CD4-positive, alpha-beta T cell (primary cell): ENCODE measurements at regions of chr3 and their contacts with region 1.

Region 1: GRCh38 chr3:195909644-195910508 is 1.5 kb upstream of the TNK2 start:
- DNase-seq: peak; percentile 84 to 97 (median 92)
- ATAC-seq: peak; percentile 55
- H3K4me3 ChIP-seq: peak overlapping the region; percentile 51
- H3K4me3 Mint-ChIP-seq: peak overlapping the region; percentile 85
- H3K27ac ChIP-seq: peak overlapping the region; percentile 44 to 59
- H3K27ac Mint-ChIP-seq: peak overlapping the region; percentile 72
- H3K4me1 ChIP-seq: peaks cover 53% of the 10 kb centered on the region
- H3K4me1 Mint-ChIP-seq: peaks cover 37% of the 10 kb centered on the region
- H3K27me3 ChIP-seq: no peaks in the 10 kb centered on the region
- H3K27me3 Mint-ChIP-seq: no peaks in the 10 kb centered on the region
- CTCF ChIP-seq: no peak

Region 2: GRCh38 chr3:195542698-195543499 is 367.0 kb before region 1 on chr3 and contains the start of gene PPP1R2:
- CTCF ChIA-PET with region 1: interaction called, 3 read pairs
- POLR2A ChIA-PET with region 1: interaction called, 16 read pairs
- intact Hi-C with region 1: no loop called
- DNase-seq: peak; percentile 82 to 97 (median 91)
- ATAC-seq: peak; percentile 80
- H3K4me3 ChIP-seq: peak within 1 kb of the TSS; percentile 70
- H3K4me3 Mint-ChIP-seq: peak within 1 kb of the TSS; percentile 88
- H3K27ac ChIP-seq: peak within 1 kb of the TSS; percentile 95 to 96
- H3K27ac Mint-ChIP-seq: peak within 1 kb of the TSS; percentile 93
- H3K4me1 ChIP-seq: peaks cover 52% of the 10 kb centered on the region
- H3K4me1 Mint-ChIP-seq: peaks cover 76% of the 10 kb centered on the region
- H3K27me3 ChIP-seq: no peaks in the 10 kb centered on the region
- H3K27me3 Mint-ChIP-seq: no peaks in the 10 kb centered on the region
- CTCF ChIP-seq: no peak
- total RNA-seq, gene PPP1R2: 205 to 210 TPM

Region 3: DNA sequence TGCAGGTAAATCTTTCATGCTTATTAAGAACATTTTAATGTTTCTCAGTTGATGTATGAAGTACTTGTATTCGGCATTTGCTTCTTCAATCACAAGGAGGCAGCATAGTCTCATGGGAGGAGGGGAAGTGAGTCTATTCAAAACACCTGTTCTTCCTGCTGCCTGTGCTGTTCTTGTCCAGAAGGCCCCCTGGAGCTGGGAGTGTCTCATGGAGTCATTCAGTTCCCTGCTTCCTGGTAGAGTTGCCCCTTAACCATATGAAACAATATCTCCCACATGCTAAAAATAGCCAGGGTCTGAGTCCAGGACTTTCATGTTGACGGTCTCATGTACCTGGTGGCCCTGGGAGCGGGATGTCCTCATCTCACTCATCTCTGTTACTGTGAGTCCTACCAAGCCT is 351.3 kb before region 1 on chr3:
- CTCF ChIA-PET with region 1: no interaction called
- POLR2A ChIA-PET with region 1: no interaction called
- intact Hi-C with region 1: loop called (anchors 2 to 5 kb)
- DNase-seq: peak in 6 of 14 experiments; percentile 32 to 80 (median 64)
- ATAC-seq: peak; percentile 78
- H3K4me3 ChIP-seq: no peak overlapping the region
- H3K4me3 Mint-ChIP-seq: peak overlapping the region; percentile 50
- H3K27ac ChIP-seq: no peak overlapping the region
- H3K27ac Mint-ChIP-seq: peak overlapping the region; percentile 72
- H3K4me1 ChIP-seq: peaks cover 28% of the 10 kb centered on the region
- H3K4me1 Mint-ChIP-seq: peaks cover 42% of the 10 kb centered on the region
- H3K27me3 ChIP-seq: no peaks in the 10 kb centered on the region
- H3K27me3 Mint-ChIP-seq: no peaks in the 10 kb centered on the region
- CTCF ChIP-seq: peak; percentile 77

Region 4: GRCh38 chr3:195863121-195864006 is 46.5 kb before region 1 on chr3:
- CTCF ChIA-PET with region 1: interaction called, 24 read pairs
- POLR2A ChIA-PET with region 1: interaction called, 7 read pairs
- intact Hi-C with region 1: loop called (anchors 1 kb)
- DNase-seq: peak; percentile 42 to 76 (median 57)
- ATAC-seq: peak; percentile 78
- H3K4me3 ChIP-seq: no peak overlapping the region
- H3K4me3 Mint-ChIP-seq: no peak overlapping the region
- H3K27ac ChIP-seq: no peak overlapping the region
- H3K27ac Mint-ChIP-seq: no peak overlapping the region
- H3K4me1 ChIP-seq: peaks cover 11% of the 10 kb centered on the region
- H3K4me1 Mint-ChIP-seq: peaks cover 5% of the 10 kb centered on the region
- H3K27me3 ChIP-seq: no peaks in the 10 kb centered on the region
- H3K27me3 Mint-ChIP-seq: no peaks in the 10 kb centered on the region
- CTCF ChIP-seq: peak; percentile 73

Region 5: GRCh38 chr3:195894780-195895607 is 14.9 kb before region 1 on chr3:
- CTCF ChIA-PET with region 1: interaction called, 91 read pairs
- POLR2A ChIA-PET with region 1: interaction called, 231 read pairs
- intact Hi-C with region 1: loop called (anchors 1 kb)
- DNase-seq: peak; percentile 51 to 87 (median 58)
- ATAC-seq: peak; percentile 66
- H3K4me3 ChIP-seq: peak overlapping the region; percentile 80
- H3K4me3 Mint-ChIP-seq: peak overlapping the region; percentile 95
- H3K27ac ChIP-seq: peak overlapping the region; percentile 71 to 88
- H3K27ac Mint-ChIP-seq: peak overlapping the region; percentile 92
- H3K4me1 ChIP-seq: peaks cover 67% of the 10 kb centered on the region
- H3K4me1 Mint-ChIP-seq: peaks cover 46% of the 10 kb centered on the region
- H3K27me3 ChIP-seq: no peaks in the 10 kb centered on the region
- H3K27me3 Mint-ChIP-seq: no peaks in the 10 kb centered on the region
- CTCF ChIP-seq: peak; percentile 90